GM10248 (cell line): ENCODE measurements at regions of chr15 and their contacts with region 1.

Region 1: DNA sequence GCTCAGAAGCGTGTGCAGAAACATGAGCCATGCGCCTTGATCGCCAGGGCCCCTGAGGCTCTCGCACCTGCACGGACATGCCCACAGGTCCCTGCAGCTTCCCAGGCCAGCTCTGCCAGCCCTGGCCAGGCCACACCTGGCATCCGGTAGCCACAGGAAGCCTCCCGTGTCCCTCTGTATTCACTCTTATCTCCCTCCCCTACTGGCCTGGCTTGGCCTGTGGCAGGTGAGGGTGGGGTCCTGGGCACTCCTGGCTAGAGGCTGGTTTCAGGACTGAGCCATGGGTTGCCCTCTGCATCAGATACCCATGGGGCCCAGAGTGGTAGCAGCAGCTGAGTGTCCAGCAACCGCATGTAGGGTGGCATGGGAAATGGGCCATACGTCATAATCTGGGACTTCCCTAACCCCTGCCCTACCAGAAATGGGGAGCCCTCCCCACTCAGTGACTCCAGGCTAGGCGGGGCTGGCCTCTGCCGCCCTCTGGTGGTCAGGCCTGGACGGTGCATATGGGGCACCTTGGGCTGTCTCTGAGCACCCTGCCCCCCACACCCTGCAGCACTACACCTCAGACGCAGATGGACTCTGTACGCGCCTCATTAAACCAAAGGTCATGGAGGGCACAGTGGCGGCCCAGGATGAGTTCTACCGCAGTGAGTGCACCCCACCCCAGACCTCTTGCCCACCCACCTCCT is 12.6 kb upstream of the LMAN1L start:
- DNase-seq: peak; percentile 95
- CTCF ChIP-seq: peak; percentile 97

Region 2: DNA sequence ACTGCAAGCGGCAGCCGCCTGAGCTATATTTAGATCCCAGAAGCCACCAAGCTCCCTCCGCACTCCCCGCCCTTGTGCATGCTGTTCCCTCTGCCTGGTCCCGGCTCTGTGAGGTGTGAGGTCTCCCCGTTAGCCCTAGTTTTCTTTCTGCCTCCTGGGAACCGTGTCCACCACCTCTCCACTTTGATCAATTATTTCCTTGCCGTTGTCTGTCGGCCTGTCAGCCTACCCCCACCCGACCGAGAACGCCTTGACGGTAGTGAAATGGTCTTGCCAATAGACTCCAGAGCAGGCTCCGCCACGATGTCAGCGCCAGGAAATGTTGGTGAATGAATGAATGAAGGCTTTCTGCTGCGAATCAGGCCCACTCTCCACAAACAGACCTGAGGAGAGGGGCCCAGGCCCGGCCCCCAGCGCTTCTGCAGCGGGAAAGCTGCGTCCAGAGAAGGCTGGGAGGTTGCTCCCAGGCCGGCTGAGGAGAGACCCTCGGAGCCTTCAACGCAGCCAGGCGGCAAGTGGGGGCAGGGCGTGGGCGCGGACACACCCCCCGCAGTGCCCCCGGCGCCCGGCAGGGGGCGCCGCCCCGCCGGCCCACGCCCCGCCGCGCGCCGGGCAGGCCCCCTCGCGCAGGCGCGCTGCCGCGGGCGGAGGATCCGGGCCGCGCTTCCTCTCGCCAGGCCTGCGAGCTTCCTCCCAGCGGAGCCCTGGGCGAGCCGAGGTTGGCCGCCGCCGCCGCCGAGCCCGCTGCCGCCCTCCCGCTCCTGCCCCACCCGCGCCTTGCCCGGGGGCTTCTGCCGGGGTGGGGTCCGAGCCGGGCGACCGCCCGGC is 18.4 kb before region 1 on chr15 and contains the start of gene CSK:
- CTCF ChIA-PET with region 1: interaction called, 1,226 read pairs
- POLR2A ChIA-PET with region 1: interaction called, 5 read pairs
- DNase-seq: peak; percentile 87
- CTCF ChIP-seq: peak; percentile 66

Region 3: DNA sequence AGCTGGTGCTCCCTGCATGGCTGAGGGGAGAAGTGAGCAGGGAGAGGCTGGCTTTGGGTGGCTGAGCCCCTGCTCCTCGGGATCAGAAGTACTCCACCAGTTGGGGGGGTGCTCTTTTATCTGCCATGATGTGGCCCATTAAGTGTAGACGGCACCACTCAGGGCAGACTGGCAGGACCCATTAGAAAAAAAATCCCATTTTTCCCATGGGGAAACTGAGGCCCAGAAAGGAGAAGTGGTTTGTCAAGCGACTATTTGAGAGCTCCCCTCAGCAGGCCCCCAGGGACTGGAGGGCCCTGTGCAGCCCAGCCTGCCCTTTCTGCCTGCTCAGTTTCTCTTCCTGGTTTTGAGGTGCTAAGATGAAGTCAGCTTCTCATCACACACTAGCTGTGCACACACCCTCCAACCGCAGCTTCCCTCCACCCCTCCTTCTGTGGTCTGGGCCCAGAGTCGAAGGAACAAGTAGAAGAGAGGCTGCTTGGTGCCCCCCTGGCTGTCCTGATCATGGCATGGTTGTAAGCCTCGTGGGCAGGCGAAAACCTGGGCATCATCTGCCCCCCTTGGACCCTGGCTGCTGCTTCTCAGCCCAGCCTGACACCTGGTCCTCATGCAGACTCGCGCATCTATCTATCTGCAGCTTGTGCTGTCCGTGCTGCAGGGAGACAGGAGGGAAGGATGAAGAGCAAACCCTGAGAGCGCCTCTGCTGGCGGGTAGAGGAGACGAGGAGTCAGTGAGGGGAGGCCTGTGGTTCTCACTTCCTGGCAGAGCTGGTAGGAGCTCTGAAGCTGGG is 12.6 kb before region 1 on chr15:
- CTCF ChIA-PET with region 1: interaction called, 1,226 read pairs
- POLR2A ChIA-PET with region 1: interaction called, 4 read pairs
- DNase-seq: peak; percentile 82
- CTCF ChIP-seq: peak; percentile 78

Region 4: GRCh38 chr15:74842581-74843444 is 42.8 kb after region 1 on chr15 and contains the start of gene ULK3:
- CTCF ChIA-PET with region 1: interaction called, 10 read pairs
- POLR2A ChIA-PET with region 1: no interaction called
- DNase-seq: peak; percentile 97
- CTCF ChIP-seq: peak; percentile 63